ENCODE measurements at regions of chr1 and their contacts with region 1.

Region 1: DNA sequence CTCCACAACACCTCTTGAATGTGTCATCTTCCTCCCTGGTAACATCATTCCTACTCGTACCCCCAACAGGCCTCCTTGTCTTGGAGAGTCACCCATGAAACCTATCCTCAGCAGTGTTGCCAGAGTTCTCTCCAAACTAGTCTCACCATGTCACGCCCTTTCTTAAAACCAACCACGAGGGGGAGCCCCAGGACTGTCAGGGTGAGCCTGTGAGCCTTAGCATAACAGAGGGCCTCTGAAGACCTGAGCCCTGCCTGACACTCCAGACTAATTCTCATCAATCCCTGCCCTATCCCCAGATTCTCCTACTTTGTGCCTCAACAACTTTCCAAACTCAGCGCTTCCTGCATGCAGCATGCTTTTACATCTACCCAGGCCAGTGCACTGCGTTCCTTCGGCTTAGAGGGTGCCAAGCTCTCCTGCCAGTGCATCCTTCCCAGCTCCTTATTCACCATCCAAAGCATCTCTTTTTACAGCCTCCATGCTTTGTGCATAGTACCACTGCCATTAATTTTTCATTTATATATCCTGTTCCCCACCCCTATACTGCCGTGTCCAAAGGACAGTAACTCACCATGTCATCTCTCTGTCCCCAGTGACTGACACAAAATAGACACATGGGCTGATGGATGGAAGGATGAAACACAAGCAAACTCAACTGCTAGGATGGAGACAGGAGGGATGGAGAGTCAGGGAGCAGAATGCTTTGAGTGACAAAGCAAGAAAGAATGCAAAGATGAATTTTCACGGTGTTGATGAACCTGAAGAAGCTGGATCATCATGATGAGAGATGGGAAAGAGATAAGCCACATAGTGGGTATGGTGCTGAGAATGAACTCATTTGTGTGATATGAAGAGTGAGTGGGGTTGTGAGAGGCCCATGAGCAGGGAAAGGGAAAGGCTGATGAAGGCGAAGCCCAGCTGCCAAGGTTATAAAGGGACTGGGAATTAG is 34.0 kb downstream of the ZNF697 start:
- DNase-seq: peak; percentile 43
- ATAC-seq: peak; percentile 95
- H3K4me3 ChIP-seq: no peak overlapping the region
- H3K27ac ChIP-seq: no peak overlapping the region
- H3K4me1 ChIP-seq: peaks cover 7% of the 10 kb centered on the region; the same call in 1 of the 2 replicates
- H3K27me3 ChIP-seq: no peaks in the 10 kb centered on the region; a peak in 1 of 4 replicates
- CTCF ChIP-seq: peak; percentile 63 to 77 (median 70)
- EP300 ChIP-seq: no peak
- POLR2A ChIP-seq: no peak
- RAD21 ChIP-seq: peak; percentile 93

Region 2: DNA sequence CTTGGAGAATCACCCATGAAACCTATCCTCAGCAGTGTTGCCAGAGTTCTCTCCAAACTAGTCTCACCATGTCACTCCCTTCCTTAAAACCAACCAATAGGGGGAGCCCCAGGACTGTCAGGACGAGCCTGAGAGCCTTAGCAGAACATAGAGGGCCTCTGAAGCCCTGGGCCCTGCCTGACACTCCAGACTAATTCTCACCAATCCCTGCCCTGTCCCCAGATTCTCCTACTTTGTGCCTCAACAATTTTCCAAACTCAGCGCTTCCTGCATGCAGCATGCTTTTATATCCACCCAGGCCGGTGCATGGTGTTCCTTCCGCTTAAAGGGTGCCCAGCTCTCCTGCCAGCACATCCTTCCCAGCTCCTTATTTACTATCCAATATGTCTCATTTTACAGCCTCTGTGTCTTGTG is 64.3 kb before region 1 on chr1:
- CTCF ChIA-PET with region 1: interaction called, 4 read pairs
- POLR2A ChIA-PET with region 1: no interaction called
- RAD21 ChIA-PET with region 1: no interaction called
- SMC1A ChIA-PET with region 1: interaction called, 3 read pairs
- in situ Hi-C with region 1: no loop called
- intact Hi-C with region 1: loop called (anchors 2 kb)
- DNase-seq: no peak
- ATAC-seq: peak; percentile 96
- H3K4me3 ChIP-seq: no peak overlapping the region
- H3K27ac ChIP-seq: no peak overlapping the region
- H3K4me1 ChIP-seq: no peaks in the 10 kb centered on the region
- H3K27me3 ChIP-seq: no peaks in the 10 kb centered on the region; a peak in 2 of 4 replicates
- CTCF ChIP-seq: peak; percentile 48 to 70 (median 61)
- EP300 ChIP-seq: no peak
- POLR2A ChIP-seq: no peak
- RAD21 ChIP-seq: peak; percentile 69

Region 3: DNA sequence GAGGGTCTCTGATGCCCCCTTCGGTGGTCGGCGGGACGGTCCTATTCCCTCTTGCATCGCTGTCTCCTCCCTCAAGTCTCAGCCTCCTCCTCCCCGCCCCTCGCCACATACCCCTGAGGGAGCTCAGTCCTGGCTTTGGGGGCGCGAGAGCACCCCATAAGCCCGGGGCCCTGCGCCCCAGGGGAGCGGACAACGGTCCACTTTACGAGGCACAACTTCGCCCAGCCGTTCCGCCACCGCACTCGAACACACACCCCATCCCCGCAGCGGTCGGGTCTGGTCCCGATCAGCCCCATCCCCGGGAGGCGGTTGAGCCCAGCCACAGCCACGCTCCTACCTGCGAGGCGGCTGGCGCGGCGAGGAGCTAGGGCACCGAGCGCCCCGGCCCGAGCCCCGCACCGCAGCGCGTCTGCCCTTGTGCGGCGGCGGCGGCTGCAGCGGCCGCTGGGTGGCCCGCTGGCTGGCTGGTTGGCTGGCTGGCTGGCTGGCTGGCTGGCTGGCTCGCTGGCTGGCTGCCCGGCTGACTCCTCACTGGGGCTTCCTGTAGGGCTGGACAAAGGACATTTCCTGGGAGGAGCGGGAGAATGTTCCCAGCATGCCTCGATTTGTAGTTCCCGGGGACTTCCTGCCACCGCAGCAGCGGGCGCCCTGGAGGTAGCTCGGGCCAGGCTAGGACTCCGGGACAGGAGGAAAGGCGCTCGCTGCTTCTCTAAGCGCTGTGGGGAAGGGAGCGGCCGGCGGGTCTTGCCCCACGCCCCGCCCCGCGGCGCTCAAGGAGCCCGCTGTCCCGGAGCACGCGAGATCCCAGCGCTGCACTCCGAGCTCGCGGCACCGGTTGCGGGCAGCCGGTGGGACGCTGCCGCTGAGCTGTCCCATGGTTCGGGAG is 33.9 kb after region 1 on chr1 and contains the start of gene ZNF697:
- CTCF ChIA-PET with region 1: interaction called, 11 read pairs
- POLR2A ChIA-PET with region 1: no interaction called
- RAD21 ChIA-PET with region 1: interaction called, 4 read pairs
- SMC1A ChIA-PET with region 1: interaction called, 3 read pairs
- in situ Hi-C with region 1: no loop called
- intact Hi-C with region 1: loop called (anchors 5 kb)
- DNase-seq: peak; percentile 51
- ATAC-seq: peak; percentile 84
- H3K4me3 ChIP-seq: peak within 1 kb of the TSS; percentile 90
- H3K27ac ChIP-seq: no peak within 1 kb of the TSS; the same call in 1 of the 2 replicates
- H3K4me1 ChIP-seq: no peaks in the 10 kb centered on the region; the same call in 1 of the 2 replicates
- H3K27me3 ChIP-seq: no peaks in the 10 kb centered on the region
- CTCF ChIP-seq: peak in 2 of 3 experiments; percentile 7 to 17; a peak in 1 of 6 replicates
- EP300 ChIP-seq: no peak
- POLR2A ChIP-seq: peak; percentile 61; the same call in 1 of the 2 replicates
- RAD21 ChIP-seq: no peak
- polyA plus RNA-seq, gene ZNF697: 0.74 to 0.99 TPM

Region 4: GRCh38 chr1:119656410-119656955 is 42.4 kb after region 1 on chr1:
- CTCF ChIA-PET with region 1: interaction called, 202 read pairs
- POLR2A ChIA-PET with region 1: no interaction called
- RAD21 ChIA-PET with region 1: interaction called, 69 read pairs
- SMC1A ChIA-PET with region 1: interaction called, 124 read pairs
- in situ Hi-C with region 1: no loop called
- intact Hi-C with region 1: no loop called
- DNase-seq: no peak
- ATAC-seq: peak; percentile 61
- H3K4me3 ChIP-seq: no peak overlapping the region
- H3K27ac ChIP-seq: no peak overlapping the region
- H3K4me1 ChIP-seq: peaks cover 18% of the 10 kb centered on the region
- H3K27me3 ChIP-seq: no peaks in the 10 kb centered on the region
- CTCF ChIP-seq: no peak
- EP300 ChIP-seq: no peak
- POLR2A ChIP-seq: no peak
- RAD21 ChIP-seq: no peak

Region 5: DNA sequence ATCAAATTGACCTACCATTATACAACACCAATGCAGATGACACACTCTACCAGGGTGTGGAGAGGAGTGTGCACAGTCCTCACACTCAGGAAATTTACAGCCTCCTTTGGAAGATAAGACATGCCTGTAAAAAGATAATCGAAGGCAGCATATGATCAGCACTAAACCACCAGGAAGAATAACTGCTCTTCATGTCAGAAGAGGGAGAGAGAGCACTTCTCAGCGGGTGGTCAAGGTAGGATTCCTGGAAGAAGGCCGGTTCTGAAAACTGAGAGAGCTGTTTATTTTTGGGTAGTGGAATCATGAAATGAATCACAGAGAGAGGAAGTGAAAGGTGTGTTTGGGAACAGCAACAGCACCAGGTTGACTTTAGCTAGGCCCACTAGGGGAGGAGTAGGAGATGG is 48.0 kb after region 1 on chr1:
- CTCF ChIA-PET with region 1: interaction called, 446 read pairs
- POLR2A ChIA-PET with region 1: interaction called, 3 read pairs
- RAD21 ChIA-PET with region 1: interaction called, 69 read pairs
- SMC1A ChIA-PET with region 1: interaction called, 124 read pairs
- in situ Hi-C with region 1: no loop called
- intact Hi-C with region 1: loop called (anchors 1 kb)
- DNase-seq: peak; percentile 52
- ATAC-seq: peak; percentile 76
- H3K4me3 ChIP-seq: peak overlapping the region; percentile 15; the same call in 1 of the 2 replicates
- H3K27ac ChIP-seq: peak overlapping the region; percentile 61
- H3K4me1 ChIP-seq: peaks cover 23% of the 10 kb centered on the region
- H3K27me3 ChIP-seq: no peaks in the 10 kb centered on the region; a peak in 1 of 4 replicates
- CTCF ChIP-seq: no peak
- EP300 ChIP-seq: peak; percentile 65 to 94
- POLR2A ChIP-seq: no peak
- RAD21 ChIP-seq: no peak

Region 6: DNA sequence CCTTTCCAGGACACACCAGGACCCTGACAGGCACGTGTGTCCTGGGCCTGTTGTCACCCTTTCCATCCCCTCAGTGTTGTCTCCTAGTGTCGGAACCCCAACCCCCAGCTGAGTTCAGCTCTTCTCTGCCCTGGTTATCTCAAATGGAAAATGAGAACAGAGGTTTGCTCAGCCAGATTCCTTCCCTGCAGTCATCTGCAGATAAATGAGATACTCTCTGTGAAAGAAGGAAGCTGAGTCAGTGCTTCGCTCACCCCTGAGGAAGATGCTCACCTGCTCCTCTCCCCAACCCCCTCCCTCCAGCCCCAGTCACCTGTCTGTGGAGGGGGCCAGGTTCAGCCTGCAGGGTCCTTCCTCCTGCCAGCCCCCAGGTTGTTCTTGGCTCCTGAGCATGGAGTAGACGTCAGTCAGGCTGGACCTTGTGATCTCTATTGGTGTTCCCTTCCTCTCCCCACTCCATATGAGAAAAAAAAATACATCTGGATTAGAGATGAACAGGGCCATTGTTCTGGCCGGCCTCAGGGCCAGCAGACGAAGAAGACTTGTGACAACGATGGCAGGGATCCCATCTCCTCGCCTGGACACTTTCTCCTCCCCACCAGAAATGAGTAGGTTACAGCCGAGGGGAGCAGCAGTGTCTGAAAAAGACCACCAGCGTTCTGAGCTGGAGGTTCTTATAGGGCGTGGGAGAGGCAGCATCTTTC is 118.6 kb after region 1 on chr1:
- CTCF ChIA-PET with region 1: no interaction called
- POLR2A ChIA-PET with region 1: no interaction called
- RAD21 ChIA-PET with region 1: no interaction called
- SMC1A ChIA-PET with region 1: no interaction called
- in situ Hi-C with region 1: no loop called
- intact Hi-C with region 1: no loop called
- DNase-seq: no peak
- ATAC-seq: no peak
- H3K4me3 ChIP-seq: no peak overlapping the region
- H3K27ac ChIP-seq: no peak overlapping the region
- H3K4me1 ChIP-seq: no peaks in the 10 kb centered on the region
- H3K27me3 ChIP-seq: no peaks in the 10 kb centered on the region
- CTCF ChIP-seq: no peak
- EP300 ChIP-seq: no peak
- POLR2A ChIP-seq: 0 out of 2 replicates have a peak, but pooled peaks have one; percentile 17
- RAD21 ChIP-seq: no peak

Region 7: DNA sequence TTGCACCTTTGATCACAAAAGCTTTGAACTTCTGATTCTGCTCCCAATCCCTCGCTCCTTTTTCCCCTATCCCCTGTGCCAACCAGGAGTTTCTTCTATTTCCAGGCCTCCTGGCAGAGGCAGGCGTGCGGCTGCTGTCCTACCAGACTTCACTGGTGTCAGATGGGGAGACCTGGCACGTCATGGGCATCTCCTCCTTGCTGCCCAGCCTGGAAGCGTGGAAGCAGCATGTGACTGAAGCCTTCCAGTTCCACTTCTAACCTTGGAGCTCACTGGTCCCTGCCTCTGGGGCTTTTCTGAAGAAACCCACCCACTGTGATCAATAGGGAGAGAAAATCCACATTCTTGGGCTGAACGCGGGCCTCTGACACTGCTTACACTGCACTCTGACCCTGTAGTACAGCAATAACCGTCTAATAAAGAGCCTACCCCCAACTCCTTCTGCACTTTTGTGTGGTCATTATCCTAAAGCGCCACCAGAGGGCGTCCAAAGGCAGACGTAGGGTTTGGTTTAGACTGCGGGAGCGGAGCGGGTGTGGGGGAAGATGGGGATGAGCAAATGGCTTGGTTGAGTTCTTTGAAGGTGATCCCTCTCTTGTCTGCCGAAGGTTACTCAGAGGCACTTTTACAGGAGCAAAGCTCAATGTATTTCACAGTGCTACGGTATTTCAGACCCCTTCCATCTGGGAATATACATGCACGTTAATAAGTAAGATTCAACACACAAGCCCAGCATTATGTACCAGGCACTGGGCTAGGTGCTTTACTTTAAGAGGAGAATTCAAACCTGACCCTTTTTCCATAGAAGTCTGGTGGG is 129.9 kb after region 1 on chr1:
- CTCF ChIA-PET with region 1: interaction called, 3 read pairs
- POLR2A ChIA-PET with region 1: no interaction called
- RAD21 ChIA-PET with region 1: interaction called, 3 read pairs
- SMC1A ChIA-PET with region 1: no interaction called
- in situ Hi-C with region 1: no loop called
- intact Hi-C with region 1: loop called (anchors 5 kb)
- DNase-seq: peak; percentile 3
- ATAC-seq: peak; percentile 92
- H3K4me3 ChIP-seq: no peak overlapping the region
- H3K27ac ChIP-seq: no peak overlapping the region
- H3K4me1 ChIP-seq: no peaks in the 10 kb centered on the region
- H3K27me3 ChIP-seq: no peaks in the 10 kb centered on the region; a peak in 1 of 4 replicates
- CTCF ChIP-seq: peak; percentile 77 to 95 (median 83)
- EP300 ChIP-seq: no peak
- POLR2A ChIP-seq: no peak
- RAD21 ChIP-seq: peak; percentile 74

Measured in GM12878 (cell line).